ENCODE measurements at regions of chr6 and their contacts with region 1.

Region 1: GRCh38 chr6:134123666-134124208 is 71.3 kb upstream of the SLC2A12 start:
- DNase-seq: no peak
- H3K4me3 ChIP-seq: no peak overlapping the region
- H3K27ac ChIP-seq: no peak overlapping the region
- H3K4me1 ChIP-seq: no peaks in the 10 kb centered on the region
- H3K27me3 ChIP-seq: no peaks in the 10 kb centered on the region
- CTCF ChIP-seq: peak in 2 of 3 experiments; percentile 37 to 52; a peak in 3 of 4 replicates
- EP300 ChIP-seq: no peak
- POLR2A ChIP-seq: no peak; a peak in 1 of 3 replicates
- RAD21 ChIP-seq: peak; percentile 36 to 38

Region 2: DNA sequence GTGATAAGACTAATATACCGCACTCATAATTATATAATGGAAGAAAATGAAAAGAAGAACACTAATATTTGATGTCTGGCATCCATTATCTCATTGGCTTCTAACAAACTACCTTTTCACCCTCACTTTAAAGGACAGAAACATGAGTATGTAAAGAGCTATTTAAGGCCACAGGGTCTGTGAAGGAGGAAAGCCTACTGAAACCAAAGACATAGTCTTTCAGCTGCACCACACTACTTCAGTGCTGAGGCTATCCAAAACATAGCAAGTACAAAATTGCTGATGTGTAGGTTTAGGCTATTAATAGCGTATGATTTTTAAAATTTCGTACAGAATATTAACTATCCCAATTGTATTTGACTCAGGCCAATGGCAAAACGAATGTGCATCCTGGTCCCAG is 33.1 kb before region 1 on chr6:
- CTCF ChIA-PET with region 1: no interaction called
- POLR2A ChIA-PET with region 1: no interaction called
- DNase-seq: no peak
- H3K4me3 ChIP-seq: no peak overlapping the region
- H3K27ac ChIP-seq: no peak overlapping the region
- H3K4me1 ChIP-seq: no peaks in the 10 kb centered on the region
- H3K27me3 ChIP-seq: peaks cover 0 to 1% (median 0%) of the 10 kb centered on the region in 4 experiments; a peak in 1 of 7 replicates
- CTCF ChIP-seq: no peak
- EP300 ChIP-seq: no peak
- POLR2A ChIP-seq: no peak
- RAD21 ChIP-seq: no peak

Region 3: GRCh38 chr6:134103006-134103405 is 20.7 kb before region 1 on chr6:
- CTCF ChIA-PET with region 1: interaction called, 116 read pairs
- POLR2A ChIA-PET with region 1: no interaction called
- DNase-seq: no peak
- H3K4me3 ChIP-seq: no peak overlapping the region
- H3K27ac ChIP-seq: no peak overlapping the region
- H3K4me1 ChIP-seq: no peaks in the 10 kb centered on the region
- H3K27me3 ChIP-seq: no peaks in the 10 kb centered on the region
- CTCF ChIP-seq: no peak
- EP300 ChIP-seq: no peak
- POLR2A ChIP-seq: no peak
- RAD21 ChIP-seq: no peak

Region 4: DNA sequence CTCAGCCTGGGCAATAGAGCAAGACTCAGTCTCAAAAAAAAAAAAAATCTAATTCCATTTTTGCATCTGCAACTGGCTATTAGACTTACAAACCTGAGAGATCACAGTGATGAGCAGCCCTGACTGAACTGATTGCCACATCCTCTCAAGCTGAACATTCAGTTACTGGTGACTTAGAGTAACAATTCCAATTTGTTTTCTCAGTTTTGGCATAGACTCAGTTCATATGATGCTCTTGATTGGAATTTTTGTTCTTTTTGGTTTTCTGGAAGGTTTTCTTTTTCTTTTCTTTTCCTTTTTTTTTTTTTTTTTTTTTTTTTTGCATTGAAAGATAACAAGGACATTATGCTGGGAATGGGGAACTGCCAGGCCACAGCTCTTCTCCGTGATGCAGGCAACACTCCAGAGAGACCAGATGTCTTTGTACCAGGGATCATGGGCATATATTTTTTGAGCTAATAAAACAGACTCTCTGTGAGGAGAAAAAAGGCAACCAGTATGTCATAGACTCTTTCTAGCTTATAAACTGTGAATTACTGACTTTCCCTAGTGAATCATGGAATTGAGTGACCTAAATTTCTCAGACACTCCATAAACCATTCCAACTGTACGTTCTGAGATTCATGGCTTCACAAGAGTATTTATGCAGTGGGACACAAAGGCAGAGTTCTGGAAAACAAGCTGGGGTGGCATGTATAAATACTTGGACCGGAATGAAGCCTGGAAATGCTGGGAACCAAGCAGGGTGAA is 14.7 kb after region 1 on chr6:
- CTCF ChIA-PET with region 1: interaction called, 25 read pairs
- POLR2A ChIA-PET with region 1: no interaction called
- DNase-seq: no peak
- H3K4me3 ChIP-seq: no peak overlapping the region
- H3K27ac ChIP-seq: no peak overlapping the region
- H3K4me1 ChIP-seq: no peaks in the 10 kb centered on the region
- H3K27me3 ChIP-seq: no peaks in the 10 kb centered on the region
- CTCF ChIP-seq: no peak
- EP300 ChIP-seq: no peak
- POLR2A ChIP-seq: no peak
- RAD21 ChIP-seq: no peak

Region 5: DNA sequence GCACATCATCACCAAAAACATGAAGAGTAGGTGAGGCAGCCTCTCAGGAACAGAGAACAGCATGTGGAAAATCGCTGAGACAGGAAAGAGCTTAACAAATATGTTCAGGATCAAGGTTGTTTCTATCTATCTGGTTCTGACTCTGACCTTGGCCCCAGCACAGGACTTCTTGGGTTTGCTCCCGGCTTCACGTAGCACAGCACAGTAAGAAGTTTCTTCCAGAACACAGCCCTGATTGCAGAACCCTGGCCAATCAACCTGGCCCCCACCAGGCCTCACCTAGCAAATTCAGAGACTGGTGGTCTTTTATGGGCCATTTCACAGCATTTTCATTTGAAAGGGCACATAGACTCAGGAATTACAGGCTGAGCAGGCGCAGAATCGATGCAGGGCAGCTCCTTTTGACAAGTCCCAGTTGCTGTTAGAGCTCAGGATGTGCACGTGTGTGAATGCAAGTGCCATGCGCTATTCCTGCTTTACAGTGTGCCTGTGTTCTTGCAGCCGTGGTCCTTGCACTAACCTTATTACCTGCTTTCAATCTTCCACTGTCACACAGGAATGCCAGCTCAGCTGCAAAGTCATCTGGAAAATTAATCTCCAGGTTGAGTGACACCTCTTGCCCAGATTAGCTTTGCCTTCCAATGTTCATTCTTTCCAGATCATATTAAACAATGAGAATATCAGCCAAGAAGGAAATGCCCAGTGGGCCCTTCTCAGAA is 29.2 kb after region 1 on chr6:
- CTCF ChIA-PET with region 1: interaction called, 23 read pairs
- POLR2A ChIA-PET with region 1: no interaction called
- DNase-seq: no peak
- H3K4me3 ChIP-seq: no peak overlapping the region
- H3K27ac ChIP-seq: no peak overlapping the region
- H3K4me1 ChIP-seq: peaks cover 0 to 2% (median 0%) of the 10 kb centered on the region in 4 experiments; a peak in 1 of 7 replicates
- H3K27me3 ChIP-seq: no peaks in the 10 kb centered on the region
- CTCF ChIP-seq: no peak
- EP300 ChIP-seq: no peak
- POLR2A ChIP-seq: no peak
- RAD21 ChIP-seq: no peak

Region 6: GRCh38 chr6:134822920-134823709 is 699.4 kb after region 1 on chr6:
- CTCF ChIA-PET with region 1: interaction called, 10 read pairs
- POLR2A ChIA-PET with region 1: no interaction called
- DNase-seq: peak in 1 of 2 experiments; percentile 44
- H3K4me3 ChIP-seq: no peak overlapping the region
- H3K27ac ChIP-seq: no peak overlapping the region
- H3K4me1 ChIP-seq: no peaks in the 10 kb centered on the region
- H3K27me3 ChIP-seq: no peaks in the 10 kb centered on the region
- CTCF ChIP-seq: peak; percentile 26 to 99 (median 92)
- EP300 ChIP-seq: no peak
- POLR2A ChIP-seq: no peak
- RAD21 ChIP-seq: peak; percentile 100